T-cell (primary cell): ENCODE measurements at regions of chr3 and their contacts with region 1.

Region 1: DNA sequence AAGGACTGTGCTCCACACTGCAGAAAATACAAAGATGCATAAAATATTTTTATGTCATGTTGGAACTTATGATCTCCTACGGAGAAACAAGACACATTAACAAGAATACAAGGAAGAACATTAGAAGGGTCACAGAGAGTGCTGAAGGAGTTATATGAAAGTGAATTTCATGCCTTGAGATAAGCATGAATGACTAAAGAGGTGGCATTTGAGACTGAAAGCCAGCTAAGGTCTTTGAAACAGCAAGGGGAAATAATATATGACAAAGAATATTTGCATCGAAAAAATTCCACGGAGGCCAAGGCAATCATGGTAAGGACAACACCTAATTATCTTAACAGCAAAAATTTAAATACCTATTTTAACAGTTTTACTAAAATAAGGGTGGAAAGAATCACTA is 12.5 kb downstream of the GSK3B start:
- DNase-seq: no peak
- ATAC-seq: no peak
- H3K4me3 ChIP-seq: no peak overlapping the region
- H3K4me3 Mint-ChIP-seq: no peak overlapping the region
- H3K27ac ChIP-seq: no peak overlapping the region
- H3K27ac Mint-ChIP-seq: no peak overlapping the region
- H3K4me1 ChIP-seq: peaks cover 19 to 24% of the 10 kb centered on the region in 2 experiments
- H3K4me1 Mint-ChIP-seq: peaks cover 74 to 77% (median 75%) of the 10 kb centered on the region in 3 donors
- H3K27me3 ChIP-seq: no peaks in the 10 kb centered on the region
- H3K27me3 Mint-ChIP-seq: no peaks in the 10 kb centered on the region

Region 2: DNA sequence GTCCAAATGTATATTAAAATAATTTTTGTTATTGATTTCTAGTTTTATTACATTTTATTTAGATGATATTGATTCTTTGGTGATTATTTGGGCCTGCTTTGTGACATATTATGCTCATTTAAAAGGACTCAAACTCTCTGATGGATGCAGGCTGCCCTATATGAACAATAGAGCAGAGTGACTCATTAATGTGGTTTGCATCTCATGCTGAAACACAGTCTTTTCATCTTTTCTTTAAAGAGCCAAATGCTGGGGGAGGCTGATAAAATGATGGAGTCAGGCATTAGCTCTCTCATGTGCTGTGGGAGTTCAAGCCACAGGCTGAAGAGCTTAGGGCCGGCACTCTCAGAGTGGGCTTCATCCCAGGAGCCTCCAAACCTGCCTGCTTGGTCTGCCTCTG is 476.8 kb before region 1 on chr3:
- CTCF ChIA-PET with region 1: no interaction called
- POLR2A ChIA-PET with region 1: no interaction called
- DNase-seq: no peak
- ATAC-seq: no peak
- H3K4me3 ChIP-seq: no peak overlapping the region
- H3K4me3 Mint-ChIP-seq: no peak overlapping the region
- H3K27ac ChIP-seq: no peak overlapping the region
- H3K27ac Mint-ChIP-seq: no peak overlapping the region
- H3K4me1 ChIP-seq: no peaks in the 10 kb centered on the region
- H3K4me1 Mint-ChIP-seq: peaks cover 0 to 3% (median 0%) of the 10 kb centered on the region in 3 donors
- H3K27me3 ChIP-seq: peaks cover 0 to 2% of the 10 kb centered on the region in 2 experiments
- H3K27me3 Mint-ChIP-seq: peaks cover 11 to 14% of the 10 kb centered on the region in 2 donors

Region 3: GRCh38 chr3:119937229-119937628 is 144.5 kb before region 1 on chr3:
- CTCF ChIA-PET with region 1: no interaction called
- POLR2A ChIA-PET with region 1: interaction called in 1 of 2 experiments, 10 read pairs
- DNase-seq: peak in 29 of 35 experiments; percentile 2 to 51 (median 12)
- ATAC-seq: peak; percentile 73 to 88 (median 81)
- H3K4me3 ChIP-seq: peak overlapping the region in 1 of 2 donors; percentile 17
- H3K4me3 Mint-ChIP-seq: peak overlapping the region; percentile 8 to 56 (median 35)
- H3K27ac ChIP-seq: peak overlapping the region; percentile 6
- H3K27ac Mint-ChIP-seq: peak overlapping the region; percentile 26 to 60
- H3K4me1 ChIP-seq: peaks cover 0 to 2% of the 10 kb centered on the region in 2 experiments
- H3K4me1 Mint-ChIP-seq: peaks cover 59 to 62% (median 59%) of the 10 kb centered on the region in 3 donors
- H3K27me3 ChIP-seq: no peaks in the 10 kb centered on the region
- H3K27me3 Mint-ChIP-seq: no peaks in the 10 kb centered on the region

Region 4: DNA sequence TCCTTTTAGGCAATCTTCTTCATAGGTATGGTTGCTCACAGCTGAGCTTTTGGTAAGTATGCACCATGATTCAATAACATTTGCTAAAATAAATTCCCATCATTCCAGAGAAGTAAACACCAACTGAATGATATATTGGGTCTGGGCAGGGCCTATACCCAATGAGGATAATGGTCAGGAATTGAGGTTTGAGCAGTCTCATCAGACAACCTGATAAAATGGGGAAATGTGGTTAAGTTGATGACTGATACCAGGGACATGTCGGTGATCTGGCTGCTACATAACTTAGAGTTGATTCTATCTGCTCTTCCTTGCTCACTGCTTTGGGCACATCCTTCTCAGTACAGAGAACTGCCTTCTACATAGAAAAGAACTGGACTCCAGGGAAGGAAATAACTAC is 110.4 kb after region 1 on chr3:
- CTCF ChIA-PET with region 1: no interaction called
- POLR2A ChIA-PET with region 1: no interaction called
- DNase-seq: no peak
- ATAC-seq: no peak
- H3K4me3 ChIP-seq: no peak overlapping the region
- H3K4me3 Mint-ChIP-seq: no peak overlapping the region
- H3K27ac ChIP-seq: no peak overlapping the region
- H3K27ac Mint-ChIP-seq: no peak overlapping the region
- H3K4me1 ChIP-seq: no peaks in the 10 kb centered on the region
- H3K4me1 Mint-ChIP-seq: no peaks in the 10 kb centered on the region
- H3K27me3 ChIP-seq: no peaks in the 10 kb centered on the region
- H3K27me3 Mint-ChIP-seq: no peaks in the 10 kb centered on the region